Calu3 (cell line): ENCODE measurements at regions of chr3 and their contacts with region 1.

Region 1: GRCh38 chr3:180250169-180250568 is 213.4 kb upstream of the PEX5L start:
- DNase-seq: peak; percentile 13
- H3K4me3 Mint-ChIP-seq: peak overlapping the region; percentile 2
- H3K27ac Mint-ChIP-seq: peak overlapping the region; percentile 11
- H3K4me1 Mint-ChIP-seq: peaks cover 46% of the 10 kb centered on the region
- H3K27me3 Mint-ChIP-seq: no peaks in the 10 kb centered on the region
- CTCF ChIP-seq: no peak

Region 2: GRCh38 chr3:180278583-180279188 is 28.5 kb after region 1 on chr3:
- CTCF ChIA-PET with region 1: interaction called, 3 read pairs
- intact Hi-C with region 1: loop called (anchors 2 kb)
- DNase-seq: no peak
- H3K4me3 Mint-ChIP-seq: no peak overlapping the region
- H3K27ac Mint-ChIP-seq: peak overlapping the region; percentile 2
- H3K4me1 Mint-ChIP-seq: peaks cover 41% of the 10 kb centered on the region
- H3K27me3 Mint-ChIP-seq: no peaks in the 10 kb centered on the region
- CTCF ChIP-seq: no peak

Region 3: GRCh38 chr3:180362081-180362480 is 111.9 kb after region 1 on chr3:
- CTCF ChIA-PET with region 1: no interaction called
- intact Hi-C with region 1: loop called (anchors 5 kb)
- DNase-seq: no peak
- H3K4me3 Mint-ChIP-seq: no peak overlapping the region
- H3K27ac Mint-ChIP-seq: no peak overlapping the region
- H3K4me1 Mint-ChIP-seq: peaks cover 10% of the 10 kb centered on the region
- H3K27me3 Mint-ChIP-seq: no peaks in the 10 kb centered on the region
- CTCF ChIP-seq: no peak

Region 4: GRCh38 chr3:180402471-180403073 is 152.4 kb after region 1 on chr3:
- CTCF ChIA-PET with region 1: no interaction called
- intact Hi-C with region 1: loop called (anchors 5 kb)
- DNase-seq: peak; percentile 22
- H3K4me3 Mint-ChIP-seq: peak overlapping the region; percentile 7
- H3K27ac Mint-ChIP-seq: peak overlapping the region; percentile 35
- H3K4me1 Mint-ChIP-seq: peaks cover 52% of the 10 kb centered on the region
- H3K27me3 Mint-ChIP-seq: no peaks in the 10 kb centered on the region
- CTCF ChIP-seq: no peak

Region 5: DNA sequence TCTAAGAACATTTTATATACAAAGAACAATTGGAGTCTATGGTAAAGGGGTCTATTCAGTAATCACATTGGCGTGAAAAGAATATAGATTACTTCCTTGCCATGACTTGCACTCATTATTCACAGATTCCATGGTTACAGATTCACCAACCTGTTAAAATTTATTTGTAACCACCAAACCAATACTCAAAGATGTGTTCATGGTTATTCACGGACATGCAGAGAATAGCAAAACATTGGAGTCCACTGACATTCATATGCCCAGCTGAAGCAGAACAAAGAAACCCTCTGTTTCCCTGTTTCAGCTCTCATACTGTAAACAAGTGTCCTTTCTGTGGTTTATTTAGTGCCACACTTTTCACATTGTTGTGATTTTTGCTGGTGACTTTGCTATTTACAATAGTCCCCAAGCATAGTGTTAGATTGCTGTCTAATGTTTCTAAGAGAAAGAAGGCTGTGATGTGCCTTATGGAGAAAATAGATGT is 166.0 kb after region 1 on chr3:
- CTCF ChIA-PET with region 1: no interaction called
- intact Hi-C with region 1: loop called (anchors 2 kb)
- DNase-seq: peak; percentile 68
- H3K4me3 Mint-ChIP-seq: peak overlapping the region; percentile 45
- H3K27ac Mint-ChIP-seq: peak overlapping the region; percentile 99
- H3K4me1 Mint-ChIP-seq: peaks cover 81% of the 10 kb centered on the region
- H3K27me3 Mint-ChIP-seq: no peaks in the 10 kb centered on the region
- CTCF ChIP-seq: no peak

Region 6: DNA sequence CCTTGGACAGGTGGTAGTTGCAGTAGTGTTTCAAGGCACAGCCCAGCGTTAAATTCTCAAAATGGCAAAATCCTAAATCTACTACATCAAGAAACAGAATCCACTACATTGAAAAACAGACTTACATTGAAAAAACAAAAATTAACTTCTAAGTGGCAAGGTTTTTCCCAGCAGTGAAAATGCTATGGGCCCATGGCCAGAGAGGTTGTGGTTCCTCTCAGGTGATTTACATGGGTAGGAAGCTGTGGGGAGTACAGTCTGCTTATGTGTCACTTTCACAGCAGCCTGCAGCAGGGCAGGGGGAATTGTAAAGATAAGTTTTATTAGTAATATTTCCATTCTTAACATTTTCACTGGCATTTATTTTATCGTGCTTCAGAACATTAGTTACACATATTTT is 376.7 kb after region 1 on chr3:
- CTCF ChIA-PET with region 1: no interaction called
- intact Hi-C with region 1: no loop called
- DNase-seq: no peak
- H3K4me3 Mint-ChIP-seq: no peak overlapping the region
- H3K27ac Mint-ChIP-seq: no peak overlapping the region
- H3K4me1 Mint-ChIP-seq: no peaks in the 10 kb centered on the region
- H3K27me3 Mint-ChIP-seq: no peaks in the 10 kb centered on the region
- CTCF ChIP-seq: no peak